PC-3 (cell line): ENCODE measurements at regions of chr2 and their contacts with region 1.

Region 1: DNA sequence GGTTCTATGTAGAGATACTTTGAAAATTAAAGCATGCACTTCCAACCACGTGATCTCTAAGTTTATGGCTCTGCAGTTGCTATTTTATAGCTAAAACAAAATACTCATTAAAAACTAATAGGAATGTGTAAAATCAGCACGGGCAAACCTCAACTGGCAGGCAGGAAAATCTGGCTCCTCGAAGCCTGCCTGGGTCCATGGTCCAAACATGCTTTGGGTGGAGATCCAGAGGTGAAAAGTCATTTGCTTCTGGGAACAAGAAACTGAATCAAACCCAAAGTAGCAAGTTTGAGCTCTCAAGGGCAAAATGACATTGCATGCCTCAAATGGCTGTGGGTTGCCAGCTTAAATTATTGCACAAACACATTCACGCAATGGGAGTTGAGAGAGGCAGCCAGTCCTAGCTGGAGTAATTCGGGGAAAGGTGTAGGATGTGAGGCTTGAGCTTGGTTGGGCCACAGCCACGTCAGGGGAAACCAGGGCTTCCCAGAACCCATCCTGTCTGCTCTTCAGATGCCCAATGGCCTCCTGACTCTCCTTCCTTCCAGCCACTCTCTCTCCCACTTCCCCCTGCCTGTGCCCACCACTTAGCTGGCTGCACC is 75.2 kb upstream of the LCLAT1 start:
- DNase-seq: no peak
- ATAC-seq: no peak
- H3K4me3 ChIP-seq: no peak overlapping the region
- H3K27ac ChIP-seq: no peak overlapping the region
- H3K4me1 ChIP-seq: peaks cover 10% of the 10 kb centered on the region
- H3K27me3 ChIP-seq: no peaks in the 10 kb centered on the region
- CTCF ChIP-seq: no peak

Region 2: DNA sequence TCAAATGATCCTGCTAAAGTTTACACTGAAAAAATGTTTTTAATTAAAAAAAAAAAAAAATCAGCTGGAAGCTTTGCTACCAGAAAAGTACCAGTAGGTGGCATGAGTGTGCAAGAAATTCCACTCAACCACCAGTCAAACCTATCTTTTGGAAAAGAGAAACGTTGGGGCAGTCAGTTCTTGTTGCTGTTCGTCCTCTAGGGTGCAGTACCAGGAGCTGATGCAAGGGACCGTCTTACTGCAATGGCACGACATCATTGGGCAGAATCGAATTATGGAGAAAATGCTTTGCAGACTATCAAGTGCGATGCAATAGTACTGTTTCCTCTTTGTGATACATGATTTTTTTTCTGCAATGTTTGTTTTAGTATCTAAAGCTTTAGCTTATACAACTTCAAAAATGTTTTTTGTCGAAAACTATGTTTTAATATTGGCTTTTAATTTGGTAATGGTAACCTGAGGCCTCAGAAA is 206.8 kb before region 1 on chr2:
- CTCF ChIA-PET with region 1: no interaction called
- POLR2A ChIA-PET with region 1: no interaction called
- intact Hi-C with region 1: no loop called
- DNase-seq: peak; percentile 89
- ATAC-seq: peak; percentile 97
- H3K4me3 ChIP-seq: no peak overlapping the region
- H3K27ac ChIP-seq: no peak overlapping the region
- H3K4me1 ChIP-seq: no peaks in the 10 kb centered on the region
- H3K27me3 ChIP-seq: no peaks in the 10 kb centered on the region
- CTCF ChIP-seq: peak; percentile 96

Region 3: DNA sequence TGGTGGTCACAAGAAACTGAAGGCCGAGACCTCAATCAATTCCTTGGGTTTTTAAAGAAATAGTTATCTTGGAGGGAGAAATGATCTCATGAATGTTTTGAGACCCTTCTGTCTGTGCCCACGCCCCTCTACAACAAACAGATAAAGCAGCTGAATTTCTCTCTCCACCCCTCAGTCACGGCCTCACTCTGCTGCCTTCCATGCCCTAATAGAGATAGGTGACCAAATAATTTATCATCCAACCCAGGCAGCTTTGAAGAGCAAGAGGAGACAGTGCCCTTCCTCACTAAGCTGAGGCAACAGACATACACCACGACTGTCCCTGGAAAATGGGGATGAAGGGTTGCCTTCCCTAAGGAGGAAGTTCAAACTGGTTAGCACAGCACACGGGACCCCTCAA is 69.3 kb before region 1 on chr2:
- CTCF ChIA-PET with region 1: no interaction called
- POLR2A ChIA-PET with region 1: interaction called, 10 read pairs
- intact Hi-C with region 1: no loop called
- DNase-seq: no peak
- ATAC-seq: no peak
- H3K4me3 ChIP-seq: no peak overlapping the region
- H3K27ac ChIP-seq: no peak overlapping the region
- H3K4me1 ChIP-seq: peaks cover 5% of the 10 kb centered on the region; the same call in 1 of the 2 replicates
- H3K27me3 ChIP-seq: no peaks in the 10 kb centered on the region
- CTCF ChIP-seq: no peak

Region 4: GRCh38 chr2:30569946-30570345 is 198.1 kb after region 1 on chr2:
- CTCF ChIA-PET with region 1: no interaction called
- POLR2A ChIA-PET with region 1: no interaction called
- intact Hi-C with region 1: no loop called
- DNase-seq: no peak
- ATAC-seq: no peak
- H3K4me3 ChIP-seq: no peak overlapping the region
- H3K27ac ChIP-seq: no peak overlapping the region
- H3K4me1 ChIP-seq: no peaks in the 10 kb centered on the region
- H3K27me3 ChIP-seq: no peaks in the 10 kb centered on the region
- CTCF ChIP-seq: no peak